ENCODE measurements at regions of chr11 and their contacts with region 1.

Region 1: DNA sequence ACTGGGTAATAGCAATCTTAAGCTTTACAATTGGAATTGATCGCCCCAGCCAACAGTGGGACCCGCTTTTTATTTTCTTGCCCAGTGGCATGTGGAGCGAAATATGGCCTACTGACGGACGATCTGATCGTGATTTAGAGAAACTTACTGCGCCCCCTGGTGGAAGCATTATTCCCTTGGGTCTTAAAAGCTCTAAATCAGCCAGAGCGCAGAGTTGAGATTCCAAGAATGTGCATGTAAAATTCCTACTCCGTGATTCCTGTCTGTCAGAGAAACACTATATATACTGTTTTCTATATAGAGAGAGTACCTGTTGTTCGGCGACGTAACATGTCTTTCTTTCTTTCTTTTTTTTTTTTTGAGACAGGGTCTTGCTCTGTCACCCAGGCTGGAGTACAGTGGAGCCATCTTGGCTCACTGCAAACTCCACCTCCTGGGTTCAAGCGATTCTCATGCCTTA is 3.7 kb upstream of the DPF2 start:
- DNase-seq: peak; percentile 63 to 90 (median 86)
- ATAC-seq: peak; percentile 18
- H3K4me3 ChIP-seq: no peak overlapping the region
- H3K4me3 Mint-ChIP-seq: no peak overlapping the region
- H3K27ac ChIP-seq: no peak overlapping the region
- H3K27ac Mint-ChIP-seq: no peak overlapping the region
- H3K4me1 ChIP-seq: peaks cover 11% of the 10 kb centered on the region
- H3K4me1 Mint-ChIP-seq: peaks cover 19% of the 10 kb centered on the region
- H3K27me3 ChIP-seq: no peaks in the 10 kb centered on the region
- H3K27me3 Mint-ChIP-seq: no peaks in the 10 kb centered on the region
- CTCF ChIP-seq: peak; percentile 92

Region 2: DNA sequence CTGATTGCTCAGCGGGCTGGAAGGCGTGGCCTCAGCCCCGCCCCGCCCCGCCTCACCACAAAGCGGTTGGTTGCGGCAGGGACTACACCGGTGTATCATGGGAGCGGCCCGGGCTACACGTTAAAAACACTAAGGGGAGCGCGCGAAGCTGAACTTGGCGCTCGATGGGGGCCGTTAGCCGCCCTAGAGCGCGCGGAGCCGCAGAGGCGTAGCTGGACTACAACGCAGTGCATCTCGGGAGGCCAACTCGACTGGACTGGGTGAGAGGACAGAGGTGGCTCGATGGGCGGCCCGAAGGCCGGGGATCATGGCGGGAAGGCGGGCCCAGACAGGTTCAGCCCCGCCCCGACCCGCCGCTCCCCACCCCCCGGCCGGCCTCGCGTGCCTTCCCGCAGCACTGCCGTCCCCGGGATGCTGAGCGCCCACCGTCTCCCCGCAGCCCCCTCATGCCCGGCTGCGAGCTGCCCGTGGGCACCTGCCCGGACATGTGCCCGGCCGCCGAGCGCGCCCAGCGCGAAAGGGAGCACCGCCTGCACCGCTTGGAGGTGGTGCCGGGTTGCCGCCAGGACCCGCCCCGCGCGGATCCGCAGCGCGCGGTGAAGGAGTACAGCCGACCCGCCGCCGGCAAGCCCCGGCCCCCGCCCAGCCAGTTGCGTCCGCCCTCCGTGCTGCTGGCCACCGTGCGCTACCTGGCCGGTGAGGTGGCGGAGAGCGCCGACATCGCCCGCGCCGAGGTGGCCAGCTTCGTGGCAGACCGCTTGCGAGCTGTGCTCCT is 288.9 kb before region 1 on chr11 and contains the start of gene SAC3D1:
- CTCF ChIA-PET with region 1: no interaction called
- POLR2A ChIA-PET with region 1: no interaction called
- intact Hi-C with region 1: loop called in 1 of 2 experiments (anchors 5 kb)
- DNase-seq: peak; percentile 67 to 94 (median 85)
- ATAC-seq: peak; percentile 90
- H3K4me3 ChIP-seq: peak within 1 kb of the TSS; percentile 63 to 76
- H3K4me3 Mint-ChIP-seq: peak within 1 kb of the TSS; percentile 93
- H3K27ac ChIP-seq: peak within 1 kb of the TSS; percentile 34 to 82
- H3K27ac Mint-ChIP-seq: peak within 1 kb of the TSS; percentile 91
- H3K4me1 ChIP-seq: peaks cover 17% of the 10 kb centered on the region
- H3K4me1 Mint-ChIP-seq: peaks cover 15% of the 10 kb centered on the region
- H3K27me3 ChIP-seq: no peaks in the 10 kb centered on the region
- H3K27me3 Mint-ChIP-seq: no peaks in the 10 kb centered on the region
- CTCF ChIP-seq: no peak
- total RNA-seq, gene SAC3D1: 0.57 to 0.94 TPM

Region 3: GRCh38 chr11:65204646-65205601 is 125.0 kb before region 1 on chr11:
- CTCF ChIA-PET with region 1: interaction called, 16 read pairs
- POLR2A ChIA-PET with region 1: interaction called, 3 read pairs
- intact Hi-C with region 1: loop called in 1 of 2 experiments (anchors 1 kb)
- DNase-seq: peak in 7 of 9 experiments; percentile 16 to 66 (median 63)
- ATAC-seq: peak; percentile 75
- H3K4me3 ChIP-seq: no peak overlapping the region
- H3K4me3 Mint-ChIP-seq: no peak overlapping the region
- H3K27ac ChIP-seq: no peak overlapping the region
- H3K27ac Mint-ChIP-seq: no peak overlapping the region
- H3K4me1 ChIP-seq: no peaks in the 10 kb centered on the region
- H3K4me1 Mint-ChIP-seq: peaks cover 4% of the 10 kb centered on the region
- H3K27me3 ChIP-seq: no peaks in the 10 kb centered on the region
- H3K27me3 Mint-ChIP-seq: no peaks in the 10 kb centered on the region
- CTCF ChIP-seq: peak; percentile 93

Region 4: DNA sequence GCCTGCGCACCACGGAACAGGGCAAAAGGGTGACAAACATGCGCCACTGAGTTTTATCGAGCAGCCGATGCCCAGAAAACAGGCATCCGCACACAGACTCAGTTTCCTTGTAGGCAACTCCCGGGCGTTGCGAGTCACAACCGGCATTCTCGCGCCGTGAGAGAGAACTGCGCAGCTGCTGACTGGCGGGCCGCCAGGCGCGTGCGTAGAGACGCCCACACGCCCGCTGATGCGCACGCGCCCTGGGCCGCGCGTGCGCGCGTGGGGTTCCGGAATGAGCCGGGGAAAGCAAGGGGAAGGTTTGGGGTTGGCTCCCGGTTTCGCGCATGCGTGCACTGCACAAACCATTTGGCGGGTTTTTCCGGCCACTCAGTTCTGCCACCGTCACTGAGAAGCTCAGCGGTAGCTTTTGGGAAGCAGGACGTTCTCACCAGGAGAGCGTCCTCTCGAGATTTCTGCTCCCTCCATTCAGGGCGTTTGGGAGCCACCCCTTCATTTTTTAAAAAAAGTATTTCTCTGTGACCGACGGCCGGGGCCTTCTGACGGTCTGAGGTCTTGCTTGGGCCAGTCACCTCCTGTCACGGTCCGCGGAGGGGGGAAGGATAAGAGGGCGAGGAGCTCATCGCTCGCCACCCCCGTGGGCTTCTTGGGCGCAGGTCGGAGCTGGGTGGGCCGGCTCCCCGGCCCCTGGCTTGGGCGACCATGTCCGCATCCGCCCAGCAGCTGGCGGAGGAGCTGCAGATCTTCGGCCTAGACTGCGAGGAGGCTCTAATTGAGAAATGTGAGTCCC is 68.2 kb before region 1 on chr11 and contains the start of gene POLA2:
- CTCF ChIA-PET with region 1: interaction called, 5 read pairs
- POLR2A ChIA-PET with region 1: interaction called, 4 read pairs
- intact Hi-C with region 1: loop called (anchors 1 to 5 kb)
- DNase-seq: peak; percentile 90 to 99 (median 95)
- ATAC-seq: peak; percentile 95
- H3K4me3 ChIP-seq: peak within 1 kb of the TSS; percentile 79 to 85
- H3K4me3 Mint-ChIP-seq: peak within 1 kb of the TSS; percentile 93
- H3K27ac ChIP-seq: peak within 1 kb of the TSS; percentile 85 to 93
- H3K27ac Mint-ChIP-seq: peak within 1 kb of the TSS; percentile 95
- H3K4me1 ChIP-seq: peaks cover 14% of the 10 kb centered on the region
- H3K4me1 Mint-ChIP-seq: peaks cover 43% of the 10 kb centered on the region
- H3K27me3 ChIP-seq: no peaks in the 10 kb centered on the region
- H3K27me3 Mint-ChIP-seq: no peaks in the 10 kb centered on the region
- CTCF ChIP-seq: no peak
- total RNA-seq, gene POLA2: 8.5 to 9.3 TPM

Region 5: GRCh38 chr11:65314501-65315203 is 15.3 kb before region 1 on chr11 and contains the start of gene CDC42EP2:
- CTCF ChIA-PET with region 1: interaction called, 105 read pairs
- POLR2A ChIA-PET with region 1: interaction called, 4 read pairs
- intact Hi-C with region 1: loop called in 1 of 2 experiments (anchors 1 kb)
- DNase-seq: peak; percentile 45 to 83 (median 72)
- ATAC-seq: peak; percentile 90
- H3K4me3 ChIP-seq: peak within 1 kb of the TSS; percentile 73 to 81
- H3K4me3 Mint-ChIP-seq: peak within 1 kb of the TSS; percentile 80
- H3K27ac ChIP-seq: no peak within 1 kb of the TSS
- H3K27ac Mint-ChIP-seq: no peak within 1 kb of the TSS
- H3K4me1 ChIP-seq: peaks cover 15% of the 10 kb centered on the region
- H3K4me1 Mint-ChIP-seq: peaks cover 7% of the 10 kb centered on the region
- H3K27me3 ChIP-seq: peaks cover 0 to 5% of the 10 kb centered on the region in 2 experiments
- H3K27me3 Mint-ChIP-seq: no peaks in the 10 kb centered on the region
- CTCF ChIP-seq: no peak
- total RNA-seq, gene CDC42EP2: 0.67 to 0.76 TPM

Region 6: GRCh38 chr11:65354265-65355012 is 24.5 kb after region 1 on chr11 and contains the start of gene TIGD3:
- CTCF ChIA-PET with region 1: interaction called, 17 read pairs
- POLR2A ChIA-PET with region 1: interaction called, 3 read pairs
- intact Hi-C with region 1: loop called (anchors 1 kb)
- DNase-seq: peak; percentile 94 to 99 (median 98)
- ATAC-seq: peak; percentile 97
- H3K4me3 ChIP-seq: peak within 1 kb of the TSS; percentile 49 to 51
- H3K4me3 Mint-ChIP-seq: peak within 1 kb of the TSS; percentile 91
- H3K27ac ChIP-seq: peak within 1 kb of the TSS in 1 of 2 experiments; percentile 58
- H3K27ac Mint-ChIP-seq: peak within 1 kb of the TSS; percentile 81
- H3K4me1 ChIP-seq: peaks cover 6% of the 10 kb centered on the region
- H3K4me1 Mint-ChIP-seq: peaks cover 13% of the 10 kb centered on the region
- H3K27me3 ChIP-seq: no peaks in the 10 kb centered on the region
- H3K27me3 Mint-ChIP-seq: no peaks in the 10 kb centered on the region
- CTCF ChIP-seq: no peak
- total RNA-seq, gene TIGD3: 0.35 to 0.75 TPM

Region 7: DNA sequence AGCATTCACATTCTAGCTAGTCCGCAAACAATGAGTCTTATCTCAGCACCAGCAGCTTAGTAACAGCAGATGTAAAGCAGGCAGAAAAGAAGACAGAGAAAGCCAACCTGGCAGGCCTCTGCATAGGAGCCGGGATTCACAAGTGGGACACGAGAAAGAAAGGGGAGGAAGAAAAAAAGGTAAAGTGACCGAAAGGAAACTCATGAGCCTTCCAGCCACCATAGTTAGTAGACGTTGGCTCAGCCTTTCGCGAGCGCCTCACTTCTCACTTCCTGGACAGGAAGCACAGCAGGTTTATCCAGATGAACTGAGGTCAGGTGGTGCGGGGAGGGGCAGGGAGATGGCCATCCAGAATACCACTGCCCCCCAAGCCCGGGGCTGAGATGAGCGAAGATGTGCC is 362.4 kb after region 1 on chr11:
- CTCF ChIA-PET with region 1: no interaction called
- POLR2A ChIA-PET with region 1: no interaction called
- intact Hi-C with region 1: no loop called
- DNase-seq: no peak
- ATAC-seq: no peak
- H3K4me3 ChIP-seq: no peak overlapping the region
- H3K4me3 Mint-ChIP-seq: no peak overlapping the region
- H3K27ac ChIP-seq: no peak overlapping the region
- H3K27ac Mint-ChIP-seq: no peak overlapping the region
- H3K4me1 ChIP-seq: no peaks in the 10 kb centered on the region
- H3K4me1 Mint-ChIP-seq: no peaks in the 10 kb centered on the region
- H3K27me3 ChIP-seq: no peaks in the 10 kb centered on the region
- H3K27me3 Mint-ChIP-seq: no peaks in the 10 kb centered on the region
- CTCF ChIP-seq: no peak

Region 8: DNA sequence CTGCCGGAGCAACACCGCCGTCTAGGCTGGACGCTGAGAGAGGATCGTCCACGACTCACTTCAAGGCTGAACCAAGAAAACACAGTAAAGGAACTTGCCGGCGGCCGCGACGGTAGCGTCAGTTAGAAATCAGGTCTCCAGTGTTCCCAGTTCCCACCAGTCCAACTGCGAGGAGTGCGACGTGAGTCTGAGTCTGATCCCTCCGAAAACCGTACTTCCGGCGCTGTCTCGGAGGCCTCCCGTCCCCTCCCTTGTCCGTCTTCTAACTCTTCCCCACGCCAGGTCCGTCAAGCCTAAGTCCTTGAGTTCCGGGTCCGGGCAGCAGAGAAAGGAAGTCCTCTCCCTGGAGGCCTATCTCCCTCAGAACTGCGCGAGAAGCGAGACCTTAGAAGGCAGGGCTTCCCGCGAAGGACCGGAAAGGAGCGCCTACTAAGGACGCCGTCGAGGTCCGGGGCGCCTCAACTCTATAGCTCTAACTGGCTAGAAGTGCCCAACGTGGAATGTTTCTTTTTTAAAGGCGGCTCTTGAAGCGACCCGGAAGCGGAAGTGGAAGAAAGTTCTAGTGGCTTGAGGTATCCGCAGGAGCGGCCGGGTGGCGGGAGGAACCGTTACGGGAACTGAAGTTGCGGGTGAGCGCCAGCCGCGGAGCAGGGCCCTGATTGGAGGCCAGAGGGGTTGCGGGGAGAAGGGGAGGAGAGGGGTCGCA is 672.1 kb after region 1 on chr11 and contains the starts of genes BANF1 and EIF1AD:
- CTCF ChIA-PET with region 1: no interaction called
- POLR2A ChIA-PET with region 1: no interaction called
- intact Hi-C with region 1: loop called in 1 of 2 experiments (anchors 5 kb)
- DNase-seq: peak; percentile 85 to 98 (median 92)
- ATAC-seq: peak; percentile 83
- H3K4me3 ChIP-seq: peak within 1 kb of the TSS; percentile 80 to 98
- H3K4me3 Mint-ChIP-seq: peak within 1 kb of the TSS; percentile 99
- H3K27ac ChIP-seq: peak within 1 kb of the TSS; percentile 93 to 95
- H3K27ac Mint-ChIP-seq: peak within 1 kb of the TSS; percentile 98
- H3K4me1 ChIP-seq: peaks cover 21% of the 10 kb centered on the region
- H3K4me1 Mint-ChIP-seq: peaks cover 43% of the 10 kb centered on the region
- H3K27me3 ChIP-seq: no peaks in the 10 kb centered on the region
- H3K27me3 Mint-ChIP-seq: no peaks in the 10 kb centered on the region
- CTCF ChIP-seq: no peak
- total RNA-seq, gene BANF1: 31.6 to 34.0 TPM
- total RNA-seq, gene EIF1AD: 119 to 126 TPM